ENCODE measurements at regions of chr4 and their contacts with region 1.

Region 1: DNA sequence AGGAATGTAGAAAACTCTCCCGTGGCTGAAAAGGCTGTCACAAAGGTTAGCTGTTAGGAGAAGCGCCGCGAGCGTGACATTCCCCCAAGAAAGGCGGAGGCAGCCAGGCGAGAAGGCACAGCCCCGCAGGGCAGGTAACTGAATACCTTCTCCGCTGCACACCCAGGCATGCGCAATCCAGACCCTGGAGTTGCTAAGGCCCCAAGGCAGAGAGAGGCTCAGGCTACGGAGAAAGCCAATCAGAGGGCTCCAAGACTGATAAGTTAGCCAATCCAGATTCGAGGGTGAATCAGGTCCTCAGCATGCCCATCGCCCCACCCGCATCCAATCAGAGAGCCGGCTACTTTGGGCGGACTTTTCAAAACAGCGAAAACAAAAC is 485 bp upstream of the CCNG2 start:
- DNase-seq: peak; percentile 97
- H3K4me3 Mint-ChIP-seq: peak overlapping the region; percentile 95
- H3K27ac Mint-ChIP-seq: peak overlapping the region; percentile 94
- H3K4me1 Mint-ChIP-seq: peaks cover 27% of the 10 kb centered on the region
- H3K27me3 Mint-ChIP-seq: no peaks in the 10 kb centered on the region

Region 2: DNA sequence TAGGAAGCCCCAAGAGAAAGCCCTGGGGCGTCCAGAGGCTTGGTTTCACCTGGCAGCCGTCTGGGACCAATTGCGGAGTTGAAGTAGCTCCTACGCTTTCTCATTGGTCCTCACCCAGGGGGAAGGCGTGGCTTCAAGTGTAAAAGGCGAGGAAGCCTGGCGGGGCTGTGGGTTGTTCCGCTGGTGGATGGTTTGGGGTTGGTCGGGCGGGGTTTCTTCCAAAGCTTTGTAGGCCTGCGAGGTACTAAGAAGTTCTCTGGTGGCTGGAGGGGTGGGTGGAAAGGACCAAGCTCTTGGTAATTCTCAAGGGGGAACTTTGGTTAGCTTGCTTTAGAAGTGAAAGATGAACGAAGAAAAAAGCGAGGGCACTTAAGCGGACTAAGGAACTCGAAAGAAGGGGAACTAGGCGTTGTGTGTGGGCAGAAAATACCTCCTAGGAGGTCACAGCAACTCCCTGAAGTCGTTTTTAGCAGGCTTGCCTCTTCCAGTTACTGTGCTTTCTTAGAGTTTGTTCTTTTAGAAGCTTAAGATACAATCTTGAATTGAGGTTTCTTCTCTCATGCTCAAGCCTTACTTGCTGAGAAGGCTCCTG is 37.1 kb after region 1 on chr4:
- CTCF ChIA-PET with region 1: interaction called, 3 read pairs
- POLR2A ChIA-PET with region 1: interaction called, 8 read pairs
- intact Hi-C with region 1: loop called (anchors 2 kb)
- DNase-seq: peak; percentile 85
- H3K4me3 Mint-ChIP-seq: peak overlapping the region; percentile 82
- H3K27ac Mint-ChIP-seq: peak overlapping the region; percentile 81
- H3K4me1 Mint-ChIP-seq: peaks cover 18% of the 10 kb centered on the region
- H3K27me3 Mint-ChIP-seq: peaks cover 2% of the 10 kb centered on the region

Region 3: GRCh38 chr4:77220828-77221613 is 64.5 kb after region 1 on chr4:
- CTCF ChIA-PET with region 1: no interaction called
- POLR2A ChIA-PET with region 1: no interaction called
- intact Hi-C with region 1: no loop called
- DNase-seq: no peak
- H3K4me3 Mint-ChIP-seq: no peak overlapping the region
- H3K27ac Mint-ChIP-seq: no peak overlapping the region
- H3K4me1 Mint-ChIP-seq: no peaks in the 10 kb centered on the region
- H3K27me3 Mint-ChIP-seq: peaks cover 2% of the 10 kb centered on the region

Region 4: DNA sequence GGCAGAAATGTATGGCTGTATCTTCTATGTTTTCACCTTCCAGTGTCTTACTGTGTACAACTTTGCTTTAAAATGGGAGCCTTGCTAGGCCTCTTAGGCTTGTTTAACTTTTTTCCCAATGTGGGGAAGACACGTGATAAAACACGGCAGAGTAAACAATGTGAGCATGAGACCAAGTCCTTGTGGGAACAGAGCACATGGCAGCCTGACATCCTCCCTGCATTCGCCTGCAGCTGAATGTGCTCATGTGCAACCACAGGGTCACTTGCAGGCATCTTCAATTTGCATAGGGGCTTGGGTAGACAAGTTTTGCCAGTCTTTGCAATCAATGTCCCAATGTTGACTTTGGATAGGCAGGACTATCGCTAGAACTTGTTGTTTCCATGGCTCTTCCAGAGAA is 92.3 kb after region 1 on chr4:
- CTCF ChIA-PET with region 1: no interaction called
- POLR2A ChIA-PET with region 1: no interaction called
- intact Hi-C with region 1: no loop called
- DNase-seq: no peak
- H3K4me3 Mint-ChIP-seq: no peak overlapping the region
- H3K27ac Mint-ChIP-seq: no peak overlapping the region
- H3K4me1 Mint-ChIP-seq: no peaks in the 10 kb centered on the region
- H3K27me3 Mint-ChIP-seq: peaks cover 8% of the 10 kb centered on the region

Measured in activated CD4-positive, alpha-beta memory T cell treated with anti-CD3 and anti-CD28 coated beads for 36 hours (primary cell).